ENCODE measurements at regions of chr6 and their contacts with region 1.

Region 1: DNA sequence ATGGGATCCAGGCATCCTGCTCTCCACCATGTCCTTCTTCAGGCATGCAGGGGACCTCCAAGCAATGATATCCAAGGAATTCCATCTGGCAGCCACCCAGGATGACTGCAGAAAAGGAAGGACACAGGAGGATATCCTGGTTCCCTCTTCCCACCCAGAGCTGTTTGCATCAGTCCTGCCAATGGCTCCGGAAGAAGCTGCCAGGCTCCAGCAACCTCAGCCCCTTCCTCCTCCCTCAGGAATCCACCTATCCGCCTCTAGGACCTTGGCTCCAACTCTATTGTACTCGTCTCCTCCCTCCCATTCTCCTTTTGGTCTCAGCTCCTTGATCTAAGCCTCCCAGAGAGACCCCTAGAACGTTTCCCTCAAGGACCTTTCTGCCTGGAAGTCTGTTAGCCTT is 733 bp upstream of the PSORS1C2 start:
- DNase-seq: no peak
- ATAC-seq: no peak
- H3K4me3 ChIP-seq: no peak overlapping the region
- H3K27ac ChIP-seq: no peak overlapping the region
- H3K4me1 ChIP-seq: peaks cover 6% of the 10 kb centered on the region
- H3K27me3 ChIP-seq: no peaks in the 10 kb centered on the region
- CTCF ChIP-seq: no peak
- POLR2A ChIP-seq: no peak

Region 2: DNA sequence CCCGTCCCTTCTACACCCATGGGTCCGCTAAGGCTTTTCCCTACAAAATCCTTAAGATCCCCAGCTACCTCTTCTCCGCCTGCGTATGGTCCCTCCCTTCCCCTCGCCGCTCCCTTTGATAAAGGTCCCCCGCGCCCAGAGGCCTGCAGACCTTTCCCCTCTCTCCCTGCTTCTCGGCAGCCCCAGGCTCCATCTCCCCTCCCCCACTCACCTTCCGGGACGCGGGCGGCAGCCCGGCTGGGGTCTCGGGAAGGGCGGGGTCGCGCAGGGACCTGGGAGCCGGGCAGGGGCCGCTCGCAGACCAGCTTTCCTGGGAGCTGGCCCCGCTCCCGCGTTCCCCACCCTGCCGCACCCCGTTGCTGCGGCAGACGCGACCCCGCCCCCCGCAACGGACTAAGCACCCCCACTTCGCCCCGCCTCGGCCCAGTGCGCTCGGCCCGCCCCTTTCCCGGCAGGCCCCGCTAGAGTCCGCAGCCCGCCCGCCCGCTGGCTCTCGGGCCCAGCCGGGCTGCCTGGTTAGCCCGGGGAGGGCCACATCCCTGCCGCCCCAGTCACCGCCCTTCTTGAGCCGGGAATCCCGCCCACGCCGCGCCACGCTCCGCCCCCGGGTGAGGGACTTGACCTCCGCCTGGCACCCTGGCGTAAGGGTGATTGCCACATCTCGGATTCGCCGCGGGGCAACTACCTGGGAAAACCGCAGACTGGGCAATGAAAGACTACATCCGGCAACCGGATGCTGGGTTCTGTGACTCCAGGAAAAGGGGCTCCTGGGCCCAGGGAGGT is 397.1 kb before region 1 on chr6 and contains the start of gene FLOT1:
- intact Hi-C with region 1: no loop called
- DNase-seq: peak; percentile 99
- ATAC-seq: peak; percentile 90
- H3K4me3 ChIP-seq: peak within 1 kb of the TSS; percentile 59 to 63
- H3K27ac ChIP-seq: peak within 1 kb of the TSS; percentile 89 to 96 (median 92)
- H3K4me1 ChIP-seq: peaks cover 54% of the 10 kb centered on the region
- H3K27me3 ChIP-seq: no peaks in the 10 kb centered on the region
- CTCF ChIP-seq: peak in 1 of 7 experiments; percentile 9
- POLR2A ChIP-seq: peak; percentile 88 to 92 (median 90)
- total RNA-seq, gene FLOT1: 70.0 to 82.4 TPM

Region 3: DNA sequence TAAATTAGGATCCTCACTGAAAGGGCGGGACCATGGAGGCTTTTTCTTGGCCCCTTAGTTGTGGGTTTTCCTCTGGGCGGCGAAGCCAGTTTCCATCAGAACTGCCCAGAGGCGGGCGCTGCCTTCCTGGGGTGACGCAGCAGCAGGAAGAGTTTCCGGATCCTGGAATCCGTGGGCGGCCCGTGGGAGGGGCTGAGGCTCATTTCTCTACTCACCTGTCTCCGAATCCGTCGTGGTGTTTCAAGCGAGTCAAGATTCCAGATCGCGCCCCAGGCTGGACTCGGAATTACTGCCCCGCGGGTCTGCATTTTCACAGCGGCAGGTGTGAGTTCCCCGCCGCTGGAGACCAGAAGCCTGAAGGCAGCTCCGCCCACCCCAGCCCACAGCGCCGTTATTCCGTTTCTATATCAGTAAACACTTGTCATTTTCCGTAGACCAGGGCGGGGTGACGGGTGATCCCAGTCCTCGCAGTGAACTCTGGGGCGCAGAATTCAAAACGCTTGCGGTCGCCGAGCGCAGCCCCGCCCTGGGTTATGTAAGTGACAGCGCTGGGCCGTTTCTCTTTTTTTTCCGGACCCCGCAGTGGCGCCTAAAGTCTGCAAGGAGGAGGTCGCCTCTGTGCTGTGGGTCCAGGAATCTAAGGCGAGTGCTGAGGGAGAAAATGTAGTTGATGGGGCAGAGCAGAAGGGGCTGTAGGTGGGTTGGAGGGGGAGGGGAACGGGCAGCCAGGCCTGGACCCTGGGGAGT is 58.1 kb after region 1 on chr6:
- intact Hi-C with region 1: loop called (anchors 5 kb)
- DNase-seq: peak; percentile 92 to 95 (median 94)
- ATAC-seq: peak; percentile 90
- H3K4me3 ChIP-seq: peak overlapping the region; percentile 62 to 65
- H3K27ac ChIP-seq: peak overlapping the region; percentile 85 to 99 (median 96)
- H3K4me1 ChIP-seq: peaks cover 37% of the 10 kb centered on the region
- H3K27me3 ChIP-seq: no peaks in the 10 kb centered on the region
- CTCF ChIP-seq: peak in 3 of 7 experiments; percentile 6 to 11 (median 9)
- POLR2A ChIP-seq: peak; percentile 65 to 94 (median 92)

Region 4: GRCh38 chr6:31462964-31463870 is 323.6 kb after region 1 on chr6:
- intact Hi-C with region 1: no loop called
- DNase-seq: peak; percentile 89 to 95 (median 92)
- ATAC-seq: peak; percentile 99
- H3K4me3 ChIP-seq: peak overlapping the region in 1 of 2 donors; percentile 26
- H3K27ac ChIP-seq: peak overlapping the region in 3 of 4 donors; percentile 42 to 77 (median 48)
- H3K4me1 ChIP-seq: peaks cover 22% of the 10 kb centered on the region
- H3K27me3 ChIP-seq: no peaks in the 10 kb centered on the region
- CTCF ChIP-seq: no peak
- POLR2A ChIP-seq: peak; percentile 20 to 86 (median 78)